GM12878 (cell line): ENCODE measurements at regions of chr3 and their contacts with region 1.

Region 1: DNA sequence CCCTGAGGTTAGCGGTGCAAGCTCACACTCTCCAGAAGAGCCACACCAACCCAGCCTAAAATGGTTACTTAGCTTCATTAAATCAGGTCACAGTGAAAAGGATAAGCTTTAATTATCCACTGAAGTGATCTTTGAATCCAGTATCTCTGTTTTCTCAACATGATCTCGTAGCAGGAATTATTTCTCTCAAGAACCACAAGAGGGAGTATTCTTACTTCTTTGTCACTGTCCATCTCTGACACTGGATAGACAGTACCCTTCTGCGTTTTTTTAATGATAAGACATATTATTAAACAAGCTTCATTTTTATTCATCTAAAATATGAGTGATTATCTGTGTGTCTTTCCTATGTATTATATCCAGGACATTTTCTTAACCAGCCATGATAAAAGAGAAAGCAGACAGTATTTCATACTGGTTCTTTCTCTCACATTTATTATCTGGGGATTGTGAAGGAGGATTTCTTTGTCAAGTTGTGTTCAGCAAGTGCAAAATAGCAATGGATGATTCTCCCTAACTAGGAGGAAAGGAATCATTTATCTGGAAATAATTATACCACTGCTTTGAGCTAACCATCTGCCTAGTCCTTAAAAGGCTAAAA is 105.4 kb upstream of the CCDC54 start:
- DNase-seq: no peak
- ATAC-seq: peak; percentile 74
- H3K4me3 ChIP-seq: no peak overlapping the region
- H3K27ac ChIP-seq: no peak overlapping the region
- H3K4me1 ChIP-seq: no peaks in the 10 kb centered on the region
- H3K27me3 ChIP-seq: no peaks in the 10 kb centered on the region; a peak in 1 of 4 replicates
- CTCF ChIP-seq: peak; percentile 46 to 62 (median 53); a peak in 5 of 6 replicates
- EP300 ChIP-seq: no peak
- POLR2A ChIP-seq: no peak
- RAD21 ChIP-seq: peak; percentile 77

Region 2: GRCh38 chr3:107247110-107247509 is 24.8 kb before region 1 on chr3:
- CTCF ChIA-PET with region 1: no interaction called
- POLR2A ChIA-PET with region 1: no interaction called
- RAD21 ChIA-PET with region 1: no interaction called
- SMC1A ChIA-PET with region 1: no interaction called
- in situ Hi-C with region 1: no loop called
- intact Hi-C with region 1: no loop called
- DNase-seq: no peak
- ATAC-seq: no peak
- H3K4me3 ChIP-seq: no peak overlapping the region
- H3K27ac ChIP-seq: no peak overlapping the region
- H3K4me1 ChIP-seq: no peaks in the 10 kb centered on the region
- H3K27me3 ChIP-seq: no peaks in the 10 kb centered on the region
- CTCF ChIP-seq: no peak
- EP300 ChIP-seq: no peak
- POLR2A ChIP-seq: no peak
- RAD21 ChIP-seq: no peak

Region 3: GRCh38 chr3:107284612-107285011 is 12.7 kb after region 1 on chr3:
- CTCF ChIA-PET with region 1: interaction called, 9 read pairs
- POLR2A ChIA-PET with region 1: no interaction called
- RAD21 ChIA-PET with region 1: interaction called, 4 read pairs
- SMC1A ChIA-PET with region 1: interaction called, 20 read pairs
- in situ Hi-C with region 1: no loop called
- intact Hi-C with region 1: no loop called
- DNase-seq: no peak
- ATAC-seq: no peak
- H3K4me3 ChIP-seq: no peak overlapping the region
- H3K27ac ChIP-seq: no peak overlapping the region
- H3K4me1 ChIP-seq: no peaks in the 10 kb centered on the region
- H3K27me3 ChIP-seq: no peaks in the 10 kb centered on the region; a peak in 1 of 4 replicates
- CTCF ChIP-seq: no peak
- EP300 ChIP-seq: no peak
- POLR2A ChIP-seq: no peak
- RAD21 ChIP-seq: no peak

Region 4: DNA sequence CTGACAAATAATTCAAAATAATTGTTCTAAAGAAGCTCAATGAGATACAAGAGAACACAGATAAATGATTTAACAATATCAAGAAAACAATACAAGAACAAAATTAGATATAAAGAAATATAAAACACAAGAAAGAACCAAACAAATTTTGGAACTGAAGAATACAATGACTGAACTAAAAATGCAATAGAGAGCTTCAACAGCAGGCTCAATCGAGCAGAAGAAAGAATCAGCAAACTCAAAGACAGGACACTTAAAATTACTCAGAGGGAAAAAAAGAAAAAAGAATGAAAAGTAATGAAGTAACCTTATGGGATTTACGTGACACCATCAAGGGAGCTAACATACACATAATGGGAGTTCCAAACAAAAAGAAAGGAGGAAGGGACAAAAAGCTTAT is 137.5 kb after region 1 on chr3:
- CTCF ChIA-PET with region 1: interaction called, 11 read pairs
- POLR2A ChIA-PET with region 1: no interaction called
- RAD21 ChIA-PET with region 1: no interaction called
- SMC1A ChIA-PET with region 1: no interaction called
- in situ Hi-C with region 1: no loop called
- intact Hi-C with region 1: no loop called
- DNase-seq: no peak
- ATAC-seq: no peak
- H3K4me3 ChIP-seq: no peak overlapping the region
- H3K27ac ChIP-seq: no peak overlapping the region
- H3K4me1 ChIP-seq: no peaks in the 10 kb centered on the region
- H3K27me3 ChIP-seq: peaks cover 0 to 1% of the 10 kb centered on the region in 2 experiments; a peak in 1 of 4 replicates
- CTCF ChIP-seq: no peak
- EP300 ChIP-seq: no peak
- POLR2A ChIP-seq: no peak
- RAD21 ChIP-seq: no peak

Region 5: DNA sequence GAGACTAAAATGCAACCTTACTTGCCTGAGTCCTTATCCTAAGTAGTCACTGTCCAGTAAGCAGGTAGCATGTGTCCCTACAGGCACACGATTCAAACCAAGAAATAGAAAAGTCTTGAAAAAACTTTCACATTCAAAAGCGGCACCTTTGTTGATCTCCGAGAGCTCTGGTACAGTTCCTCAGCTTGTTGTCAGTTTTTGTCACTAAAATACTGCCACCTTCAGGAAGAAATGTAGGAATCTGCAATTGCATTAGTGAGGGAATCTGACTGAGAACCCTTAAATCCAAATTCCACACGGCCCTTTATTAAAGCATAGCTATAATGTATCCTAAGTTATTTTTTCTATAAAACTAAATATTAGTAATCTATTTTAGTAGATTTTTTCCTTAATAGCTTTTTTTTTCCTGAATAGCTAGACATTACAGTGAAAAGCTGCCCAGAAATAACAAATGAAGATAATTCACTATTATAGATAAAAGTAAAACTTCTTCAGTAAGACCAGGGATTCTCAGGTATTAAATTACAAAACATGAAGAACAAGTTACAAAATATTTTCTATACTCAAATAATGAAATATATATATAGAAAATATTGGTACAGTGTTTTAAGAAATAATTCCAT is 149.4 kb after region 1 on chr3:
- CTCF ChIA-PET with region 1: interaction called, 56 read pairs
- POLR2A ChIA-PET with region 1: no interaction called
- RAD21 ChIA-PET with region 1: interaction called, 27 read pairs
- SMC1A ChIA-PET with region 1: interaction called, 18 read pairs
- in situ Hi-C with region 1: no loop called
- intact Hi-C with region 1: loop called (anchors 1 kb)
- DNase-seq: no peak
- ATAC-seq: peak; percentile 86
- H3K4me3 ChIP-seq: no peak overlapping the region
- H3K27ac ChIP-seq: no peak overlapping the region
- H3K4me1 ChIP-seq: no peaks in the 10 kb centered on the region
- H3K27me3 ChIP-seq: no peaks in the 10 kb centered on the region
- CTCF ChIP-seq: peak; percentile 50 to 59 (median 57); a peak in 5 of 6 replicates
- EP300 ChIP-seq: no peak
- POLR2A ChIP-seq: no peak
- RAD21 ChIP-seq: peak; percentile 58

Region 6: DNA sequence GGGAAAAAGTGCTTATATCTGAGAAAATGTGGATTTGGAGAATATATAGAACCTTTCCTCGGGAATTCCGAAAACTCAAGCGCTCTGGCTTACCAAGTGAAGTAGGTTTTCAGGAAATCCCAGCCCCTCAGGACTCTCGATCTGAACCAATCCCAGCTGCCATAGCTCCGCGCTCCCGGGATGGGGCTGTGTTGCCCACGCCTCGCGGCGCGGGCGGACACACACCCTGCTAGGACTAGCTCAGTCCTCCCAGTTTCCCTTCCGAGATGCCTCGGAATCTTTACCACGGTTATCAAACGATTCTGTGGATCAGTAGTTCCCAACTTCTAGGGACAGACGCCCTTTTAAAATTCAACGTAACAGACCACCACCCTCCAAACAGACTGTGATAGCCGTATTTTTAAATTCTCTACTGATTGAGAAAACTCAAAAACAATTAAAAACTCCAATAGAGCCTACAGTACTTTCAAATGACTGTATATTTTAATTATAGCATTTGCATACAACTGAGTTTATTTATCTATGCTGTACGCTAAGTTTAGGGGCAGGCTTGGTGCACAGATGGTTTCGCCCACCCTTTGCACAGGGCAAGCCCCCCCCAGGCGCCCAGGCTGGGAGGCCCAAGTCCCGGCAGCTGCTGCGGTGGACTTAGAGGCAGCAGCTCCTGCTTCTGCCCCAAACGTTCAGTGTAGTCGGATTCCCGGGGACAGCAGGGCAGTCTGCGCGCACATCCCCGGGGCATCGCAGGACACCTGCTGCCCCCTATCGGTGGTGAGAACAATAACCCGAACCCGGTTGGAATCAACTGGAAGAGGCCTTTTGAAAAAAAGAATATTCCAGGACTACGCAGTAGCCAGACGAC is 157.7 kb after region 1 on chr3:
- CTCF ChIA-PET with region 1: interaction called, 13 read pairs
- POLR2A ChIA-PET with region 1: no interaction called
- RAD21 ChIA-PET with region 1: interaction called, 3 read pairs
- SMC1A ChIA-PET with region 1: interaction called, 4 read pairs
- in situ Hi-C with region 1: no loop called
- intact Hi-C with region 1: no loop called
- DNase-seq: no peak
- ATAC-seq: peak; percentile 78
- H3K4me3 ChIP-seq: no peak overlapping the region
- H3K27ac ChIP-seq: no peak overlapping the region
- H3K4me1 ChIP-seq: no peaks in the 10 kb centered on the region; the same call in 1 of the 2 replicates
- H3K27me3 ChIP-seq: peaks cover 0 to 3% of the 10 kb centered on the region in 2 experiments; a peak in 3 of 4 replicates
- CTCF ChIP-seq: peak; percentile 70 to 85 (median 78)
- EP300 ChIP-seq: no peak
- POLR2A ChIP-seq: no peak
- RAD21 ChIP-seq: peak; percentile 57

Region 7: GRCh38 chr3:107543666-107544065 is 271.8 kb after region 1 on chr3:
- CTCF ChIA-PET with region 1: interaction called, 10 read pairs
- POLR2A ChIA-PET with region 1: no interaction called
- RAD21 ChIA-PET with region 1: interaction called, 3 read pairs
- SMC1A ChIA-PET with region 1: interaction called, 4 read pairs
- in situ Hi-C with region 1: no loop called
- intact Hi-C with region 1: loop called (anchors 2 kb)
- DNase-seq: no peak
- ATAC-seq: peak; percentile 50; the same call in 2 of the 3 replicates
- H3K4me3 ChIP-seq: no peak overlapping the region
- H3K27ac ChIP-seq: no peak overlapping the region
- H3K4me1 ChIP-seq: no peaks in the 10 kb centered on the region
- H3K27me3 ChIP-seq: no peaks in the 10 kb centered on the region
- CTCF ChIP-seq: peak in 2 of 3 experiments; percentile 15 to 25; a peak in 3 of 6 replicates
- EP300 ChIP-seq: no peak
- POLR2A ChIP-seq: no peak
- RAD21 ChIP-seq: peak; percentile 47